ENCODE measurements at regions of chr17 and their contacts with region 1.

Region 1: GRCh38 chr17:7745748-7746470 is 28.4 kb downstream of the DNAH2 start:
- DNase-seq: peak; percentile 41
- ATAC-seq: peak in 1 of 2 donors; percentile 13

Region 2: GRCh38 chr17:7887482-7888183 is 141.7 kb after region 1 on chr17:
- intact Hi-C with region 1: loop called in 1 of 2 experiments (anchors 10 kb)
- DNase-seq: peak; percentile 94
- ATAC-seq: peak; percentile 74 to 90